PC-9 (cell line): ENCODE measurements at regions of chr10 and their contacts with region 1.

Region 1: GRCh38 chr10:62038609-62039190 is 137.2 kb downstream of the ARID5B start:
- DNase-seq: peak; percentile 76 to 79
- H3K4me3 ChIP-seq: no peak overlapping the region
- H3K27ac ChIP-seq: peak overlapping the region; percentile 57
- H3K4me1 ChIP-seq: peaks cover 35% of the 10 kb centered on the region
- H3K27me3 ChIP-seq: no peaks in the 10 kb centered on the region
- CTCF ChIP-seq: peak; percentile 90

Region 2: DNA sequence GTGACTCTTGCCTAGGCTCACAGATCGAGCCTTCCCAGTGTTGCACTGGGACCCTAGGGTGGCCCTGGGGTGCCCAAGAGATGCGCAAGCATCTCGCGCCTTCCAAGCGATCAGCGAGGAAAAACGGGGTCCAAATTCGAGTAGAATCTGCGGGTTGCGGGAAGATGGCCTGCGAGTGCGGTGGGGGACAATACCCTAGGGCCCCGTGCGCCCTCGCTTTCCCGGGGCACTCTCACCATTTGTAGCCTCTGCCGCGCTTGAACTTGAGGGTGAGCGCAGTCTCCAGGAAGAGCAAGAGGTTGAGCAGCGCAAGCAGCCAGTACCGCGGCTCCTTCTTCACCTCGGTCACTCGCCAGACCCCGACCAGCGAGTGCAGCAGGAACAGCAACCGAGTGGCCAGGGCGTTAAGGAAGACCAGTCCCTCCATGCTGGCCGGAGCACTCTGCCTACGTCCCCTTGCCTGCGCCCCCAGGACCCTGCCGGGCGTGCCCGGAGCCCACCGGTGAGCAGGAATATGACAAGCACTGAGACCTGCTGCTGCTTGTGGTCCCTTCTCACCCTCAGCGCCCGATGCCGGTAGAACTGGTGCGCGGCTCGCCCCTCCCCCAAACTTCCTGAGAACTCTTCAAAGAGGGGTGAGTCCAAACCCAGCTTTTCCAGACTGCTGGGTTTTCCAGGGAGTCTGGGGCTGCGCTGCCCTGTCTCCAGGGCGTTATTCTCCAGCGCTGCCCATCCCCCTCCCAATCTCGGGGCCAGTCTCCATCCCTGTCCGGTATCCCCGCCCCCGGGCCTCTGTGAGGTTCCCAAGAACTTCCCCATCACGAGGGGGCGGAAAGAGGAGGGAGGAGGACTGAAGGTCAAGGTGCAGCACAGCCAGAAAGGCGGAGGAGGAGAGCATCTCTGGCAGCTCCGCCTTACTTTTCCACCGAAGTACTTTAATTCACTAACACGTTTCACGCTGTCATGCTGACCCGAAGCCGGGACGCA is 585.8 kb before region 1 on chr10 and contains the start of gene TMEM26:
- CTCF ChIA-PET with region 1: no interaction called
- POLR2A ChIA-PET with region 1: no interaction called
- intact Hi-C with region 1: loop called (anchors 10 kb)
- DNase-seq: peak in 1 of 2 experiments; percentile 17
- H3K4me3 ChIP-seq: no peak within 1 kb of the TSS
- H3K27ac ChIP-seq: no peak within 1 kb of the TSS
- H3K4me1 ChIP-seq: no peaks in the 10 kb centered on the region
- H3K27me3 ChIP-seq: no peaks in the 10 kb centered on the region
- CTCF ChIP-seq: no peak
- total RNA-seq, gene TMEM26: not detected in 2 replicates

Region 3: GRCh38 chr10:61841338-61841875 is 197.3 kb before region 1 on chr10:
- CTCF ChIA-PET with region 1: no interaction called
- POLR2A ChIA-PET with region 1: interaction called, 10 read pairs
- intact Hi-C with region 1: loop called (anchors 1 kb)
- DNase-seq: peak in 1 of 2 experiments; percentile 61
- H3K4me3 ChIP-seq: no peak overlapping the region
- H3K27ac ChIP-seq: no peak overlapping the region
- H3K4me1 ChIP-seq: peaks cover 49% of the 10 kb centered on the region
- H3K27me3 ChIP-seq: no peaks in the 10 kb centered on the region
- CTCF ChIP-seq: no peak

Region 4: GRCh38 chr10:62076891-62077290 is 38.2 kb after region 1 on chr10:
- CTCF ChIA-PET with region 1: interaction called, 3 read pairs
- POLR2A ChIA-PET with region 1: interaction called, 7 read pairs
- intact Hi-C with region 1: loop called (anchors 5 kb)
- DNase-seq: peak; percentile 59 to 98
- H3K4me3 ChIP-seq: peak overlapping the region; percentile 15; the same call in 1 of the 2 replicates
- H3K27ac ChIP-seq: peak overlapping the region; percentile 65
- H3K4me1 ChIP-seq: peaks cover 41% of the 10 kb centered on the region
- H3K27me3 ChIP-seq: no peaks in the 10 kb centered on the region
- CTCF ChIP-seq: no peak; the same call in 1 of the 2 replicates

Region 5: DNA sequence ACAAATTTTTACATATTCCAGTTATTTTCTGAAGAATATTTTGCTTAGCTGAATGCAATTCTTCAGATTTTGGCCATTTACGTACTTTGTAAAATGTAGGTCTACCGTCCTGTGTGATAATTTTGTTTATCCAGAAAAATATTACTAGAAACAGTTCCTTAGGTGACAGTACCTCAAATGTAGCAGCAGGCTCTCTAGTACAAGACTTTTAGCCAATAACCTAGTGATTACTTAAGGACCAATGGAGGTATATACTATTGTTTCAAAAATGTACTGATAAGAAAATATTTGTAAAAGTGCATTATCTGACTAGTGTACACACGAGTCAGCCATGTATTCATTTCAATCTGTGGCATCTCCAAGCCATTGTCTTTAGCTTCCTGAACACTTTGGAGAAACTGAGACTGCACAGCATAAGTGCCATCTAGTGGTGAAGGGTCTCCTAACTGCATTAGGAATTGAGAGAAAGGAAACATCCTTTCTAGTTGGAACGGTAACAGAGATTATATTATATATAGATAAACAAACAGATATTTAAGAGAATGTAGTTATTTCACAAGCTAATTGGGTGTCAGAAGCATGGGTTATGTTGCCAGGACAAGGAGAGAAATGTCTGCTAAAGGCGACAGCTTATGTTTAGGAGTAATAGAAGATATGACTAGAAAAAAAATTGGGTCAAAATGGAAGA is 206.2 kb after region 1 on chr10:
- CTCF ChIA-PET with region 1: interaction called, 23 read pairs
- POLR2A ChIA-PET with region 1: no interaction called
- intact Hi-C with region 1: loop called (anchors 1 kb)
- DNase-seq: peak; percentile 37 to 58
- H3K4me3 ChIP-seq: no peak overlapping the region
- H3K27ac ChIP-seq: no peak overlapping the region
- H3K4me1 ChIP-seq: peaks cover 35% of the 10 kb centered on the region
- H3K27me3 ChIP-seq: no peaks in the 10 kb centered on the region
- CTCF ChIP-seq: peak; percentile 88

Region 6: DNA sequence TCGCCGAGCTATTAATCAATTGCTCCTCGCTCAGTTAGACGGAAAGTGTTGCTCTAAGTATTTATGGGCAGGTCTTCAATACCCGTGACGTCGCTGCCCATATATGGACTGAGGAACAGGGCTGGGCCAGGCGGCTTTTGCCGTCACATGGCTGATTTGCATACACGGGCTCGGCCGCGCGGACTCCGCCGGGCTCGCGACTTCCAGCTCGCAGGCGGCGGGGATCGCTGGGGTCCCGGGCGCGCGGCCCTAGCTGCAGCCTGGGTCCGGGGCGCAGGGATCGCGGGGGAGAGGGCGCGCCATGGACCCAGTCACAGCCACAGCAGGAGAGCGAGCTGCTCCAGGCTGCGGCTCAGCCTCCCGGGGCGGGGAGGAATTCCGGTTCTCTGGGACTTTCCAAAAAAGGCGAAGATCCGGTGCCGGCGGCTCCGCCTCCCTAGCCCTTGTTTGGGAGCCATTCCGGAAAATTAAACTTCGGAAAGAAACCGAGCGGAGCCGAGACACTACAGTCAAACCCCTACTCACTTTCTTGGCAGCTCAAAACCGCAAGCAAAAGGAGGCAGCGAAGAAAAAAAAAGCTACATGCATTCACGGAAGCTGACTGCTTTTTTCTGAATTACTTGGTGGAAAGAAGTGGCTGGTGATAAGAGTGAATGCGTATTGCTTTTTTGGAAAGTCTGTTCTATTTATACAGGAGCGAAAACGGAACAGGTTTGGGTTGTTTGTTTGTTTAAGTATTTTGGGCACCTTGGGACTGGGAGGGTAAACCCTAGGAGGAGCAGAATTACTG is 777.8 kb after region 1 on chr10 and contains the start of gene EGR2:
- CTCF ChIA-PET with region 1: no interaction called
- POLR2A ChIA-PET with region 1: no interaction called
- intact Hi-C with region 1: loop called (anchors 2 kb)
- DNase-seq: peak; percentile 90 to 93
- H3K4me3 ChIP-seq: peak within 1 kb of the TSS; percentile 94
- H3K27ac ChIP-seq: peak within 1 kb of the TSS; percentile 28
- H3K4me1 ChIP-seq: peaks cover 4% of the 10 kb centered on the region; the same call in 1 of the 2 replicates
- H3K27me3 ChIP-seq: no peaks in the 10 kb centered on the region
- CTCF ChIP-seq: no peak
- total RNA-seq, gene EGR2: 0.24 and 0.53 TPM in 2 replicates